Right ventricle myocardium inferior (tissue), 1 donor: ENCODE measurements at regions of chr4 and their contacts with region 1.

Region 1: GRCh38 chr4:77819843-77820648 is 878 bp upstream of the CNOT6L start:
- DNase-seq: peak; percentile 96
- ATAC-seq: peak; percentile 95

Region 2: DNA sequence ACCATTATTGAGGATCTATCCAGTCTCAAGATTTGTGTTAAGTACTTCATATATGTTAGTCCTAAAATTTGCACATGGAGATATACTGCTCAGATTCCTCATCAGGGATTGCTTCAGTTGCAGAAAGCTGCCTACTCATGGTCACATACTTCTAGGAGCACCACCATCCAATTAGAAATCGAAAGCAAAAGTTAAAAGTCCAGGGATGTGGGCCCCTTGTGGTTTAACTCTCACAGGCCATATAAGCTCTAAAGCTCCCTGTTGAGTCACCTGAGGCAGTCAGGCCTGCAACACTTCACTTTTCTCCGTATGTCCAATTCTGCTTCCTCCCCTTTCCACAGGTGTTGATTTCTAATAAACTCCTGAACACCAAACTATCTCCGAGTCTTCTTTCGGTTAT is 85.1 kb before region 1 on chr4:
- intact Hi-C with region 1: loop called (anchors 5 kb)
- DNase-seq: no peak
- ATAC-seq: no peak

Region 3: DNA sequence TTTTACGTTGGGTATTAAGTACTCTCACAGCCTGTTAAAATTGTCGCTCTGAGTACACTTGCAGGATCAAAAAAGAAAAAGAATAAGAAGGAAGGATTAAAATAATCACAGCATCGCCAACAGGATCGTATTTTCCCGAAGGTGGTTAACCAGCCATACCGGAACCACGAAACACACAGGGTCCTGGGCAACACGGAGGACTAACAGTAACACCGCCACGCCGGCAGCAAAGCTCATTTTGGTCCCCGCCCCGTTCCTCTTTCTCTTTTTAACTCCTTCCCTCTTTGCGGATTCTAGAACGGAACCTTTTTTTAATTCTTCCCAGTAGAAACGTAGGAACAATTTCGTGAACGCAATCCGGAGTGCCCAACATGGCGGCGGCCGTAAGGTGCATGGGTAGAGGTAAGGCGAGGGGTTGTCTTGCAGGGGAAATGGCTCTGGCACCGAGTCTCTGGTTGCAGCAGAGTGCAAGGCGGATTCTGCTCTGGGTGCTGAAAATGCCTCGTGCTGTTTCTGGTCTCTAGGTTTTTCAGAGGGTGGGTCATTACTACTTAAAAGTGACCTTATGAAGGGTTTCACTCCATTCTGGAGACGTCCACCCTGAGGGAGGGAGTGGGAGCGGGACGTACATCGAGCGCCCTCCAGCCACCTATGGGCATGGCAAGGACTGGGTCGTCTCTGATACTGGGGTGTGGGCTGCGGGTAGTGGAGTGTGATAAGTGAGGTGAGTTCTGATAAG is 42.6 kb after region 1 on chr4 and contains the start of gene MRPL1:
- intact Hi-C with region 1: loop called (anchors 1 kb)
- DNase-seq: peak; percentile 93
- ATAC-seq: peak; percentile 98
- total RNA-seq, gene MRPL1: 47.9 TPM

Region 4: DNA sequence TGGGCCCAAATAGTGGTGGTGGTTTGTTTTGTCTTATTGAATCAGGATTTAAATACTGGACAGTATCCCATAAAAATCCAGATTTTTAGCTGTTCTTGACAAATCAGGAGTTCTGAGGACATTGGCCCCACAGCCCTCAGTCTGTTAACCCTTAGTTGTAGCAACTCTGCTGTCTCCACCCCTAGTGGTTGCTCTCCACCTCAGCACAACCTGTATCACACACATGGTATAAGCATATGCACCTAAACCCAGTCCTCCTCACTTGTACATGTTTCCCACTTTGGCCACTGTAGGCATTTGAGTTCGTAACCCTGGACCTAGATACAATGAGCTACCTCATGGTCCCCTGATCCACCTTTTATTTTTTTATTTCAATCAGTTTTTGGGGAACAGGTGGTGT is 118.5 kb after region 1 on chr4:
- intact Hi-C with region 1: no loop called
- DNase-seq: no peak
- ATAC-seq: no peak

Region 5: DNA sequence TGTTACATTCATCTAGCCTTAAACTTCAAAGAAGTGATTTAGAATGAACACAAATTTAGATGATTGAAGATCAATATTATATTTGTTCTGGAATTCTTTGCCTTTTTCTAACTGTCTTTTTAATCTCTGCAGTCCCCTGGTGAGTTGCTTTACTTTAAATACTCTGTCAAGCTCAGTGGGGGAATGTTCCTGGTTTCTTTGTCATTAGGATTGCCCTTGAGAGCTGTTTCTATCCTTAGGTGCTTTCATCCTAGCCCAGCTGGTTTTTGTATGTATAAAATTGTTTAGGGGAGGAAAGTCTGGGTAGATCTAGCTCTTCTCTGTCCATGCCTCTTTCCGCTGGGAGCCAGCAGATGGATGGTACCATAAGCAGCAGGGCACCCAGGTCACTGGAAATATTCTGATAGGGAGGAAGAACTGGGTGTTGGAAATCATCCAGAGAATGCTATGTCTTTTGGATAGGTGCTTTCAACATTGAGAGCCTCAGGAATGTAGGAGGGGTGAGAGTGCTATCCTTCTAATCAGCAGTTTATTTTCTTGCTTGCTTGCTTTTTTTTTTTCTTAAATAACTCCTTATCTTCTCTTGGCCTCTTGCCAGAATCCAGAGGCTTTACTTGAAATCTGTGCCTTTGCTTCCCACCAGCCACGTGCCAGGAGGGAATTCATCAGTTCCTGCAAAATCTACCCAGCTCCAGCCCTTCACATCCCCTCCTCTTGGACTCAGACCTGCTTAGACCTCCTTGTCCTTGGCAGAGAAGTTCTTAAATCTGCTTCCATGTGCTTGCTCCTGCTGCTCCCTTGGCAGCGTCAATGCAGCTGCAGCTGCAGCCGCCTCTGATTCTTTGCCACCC is 516.3 kb after region 1 on chr4:
- intact Hi-C with region 1: no loop called
- DNase-seq: peak; percentile 34
- ATAC-seq: peak; percentile 46